GM12878 (cell line): ENCODE measurements at regions of chr16 and their contacts with region 1.

Region 1: DNA sequence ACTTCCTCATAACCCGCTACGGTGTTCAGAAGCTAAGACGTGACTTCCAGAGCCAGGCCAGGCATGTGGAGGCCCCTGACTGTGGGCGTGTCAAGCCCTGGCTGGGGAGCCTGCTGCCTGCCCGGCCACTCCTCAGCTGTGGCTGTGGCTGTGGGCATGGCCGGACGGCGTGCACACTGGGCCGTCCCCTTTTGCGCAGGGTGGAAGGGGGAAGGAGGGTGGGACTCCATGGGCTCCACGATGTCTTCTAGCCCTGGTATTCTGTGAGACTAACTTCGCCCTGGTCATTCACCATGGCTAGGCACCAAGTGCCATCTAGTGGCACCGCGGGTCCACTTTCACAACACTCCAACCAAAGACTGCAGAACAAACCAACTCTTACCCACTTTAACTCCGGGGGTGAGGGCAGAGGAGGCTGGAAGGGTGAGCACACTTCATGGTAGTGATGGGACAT is 67.9 kb downstream of the N4BP1 start:
- DNase-seq: no peak
- ATAC-seq: peak; percentile 63
- H3K4me3 ChIP-seq: no peak overlapping the region
- H3K27ac ChIP-seq: no peak overlapping the region
- H3K4me1 ChIP-seq: peaks cover 4% of the 10 kb centered on the region
- H3K27me3 ChIP-seq: no peaks in the 10 kb centered on the region
- CTCF ChIP-seq: peak; percentile 32 to 67 (median 40); a peak in 4 of 6 replicates
- EP300 ChIP-seq: no peak
- POLR2A ChIP-seq: peak; percentile 66
- RAD21 ChIP-seq: peak; percentile 62

Region 2: DNA sequence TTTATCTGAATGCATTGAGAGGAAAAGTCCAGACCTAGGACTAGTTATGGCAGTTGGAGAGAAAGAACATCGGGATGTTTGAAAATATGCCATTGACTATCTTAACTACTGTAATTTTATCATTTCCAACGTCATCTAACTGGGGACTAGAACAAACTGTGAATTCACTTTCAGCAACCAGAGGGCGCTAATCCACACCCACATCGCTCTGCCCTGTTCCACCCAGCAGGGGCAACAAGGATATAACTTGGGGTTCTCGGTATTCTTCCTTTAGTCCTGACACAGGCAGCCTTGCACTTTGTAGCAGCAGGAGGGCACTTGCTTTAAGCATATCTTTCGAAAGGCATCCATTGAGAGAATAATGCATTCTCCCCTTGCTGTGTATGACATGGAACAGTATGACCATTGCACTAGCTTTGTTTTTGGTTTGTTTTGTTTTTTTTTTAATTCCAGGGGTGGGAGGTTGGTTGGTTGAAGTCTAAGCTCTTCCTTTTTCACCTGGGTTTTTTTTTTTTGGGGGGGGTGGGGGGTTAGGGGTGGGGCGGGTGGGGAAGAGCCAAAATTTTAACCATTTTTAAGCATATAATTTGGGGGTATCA is 188.4 kb before region 1 on chr16:
- CTCF ChIA-PET with region 1: interaction called, 13 read pairs
- POLR2A ChIA-PET with region 1: no interaction called
- RAD21 ChIA-PET with region 1: interaction called, 4 read pairs
- SMC1A ChIA-PET with region 1: interaction called, 4 read pairs
- in situ Hi-C with region 1: no loop called
- intact Hi-C with region 1: loop called (anchors 1 kb)
- DNase-seq: peak; percentile 37
- ATAC-seq: peak; percentile 94
- H3K4me3 ChIP-seq: no peak overlapping the region
- H3K27ac ChIP-seq: no peak overlapping the region
- H3K4me1 ChIP-seq: peaks cover 5% of the 10 kb centered on the region
- H3K27me3 ChIP-seq: no peaks in the 10 kb centered on the region
- CTCF ChIP-seq: peak; percentile 86 to 93 (median 91)
- EP300 ChIP-seq: no peak
- POLR2A ChIP-seq: no peak
- RAD21 ChIP-seq: peak; percentile 88